ENCODE measurements at regions of chr16 and their contacts with region 1.

Region 1: DNA sequence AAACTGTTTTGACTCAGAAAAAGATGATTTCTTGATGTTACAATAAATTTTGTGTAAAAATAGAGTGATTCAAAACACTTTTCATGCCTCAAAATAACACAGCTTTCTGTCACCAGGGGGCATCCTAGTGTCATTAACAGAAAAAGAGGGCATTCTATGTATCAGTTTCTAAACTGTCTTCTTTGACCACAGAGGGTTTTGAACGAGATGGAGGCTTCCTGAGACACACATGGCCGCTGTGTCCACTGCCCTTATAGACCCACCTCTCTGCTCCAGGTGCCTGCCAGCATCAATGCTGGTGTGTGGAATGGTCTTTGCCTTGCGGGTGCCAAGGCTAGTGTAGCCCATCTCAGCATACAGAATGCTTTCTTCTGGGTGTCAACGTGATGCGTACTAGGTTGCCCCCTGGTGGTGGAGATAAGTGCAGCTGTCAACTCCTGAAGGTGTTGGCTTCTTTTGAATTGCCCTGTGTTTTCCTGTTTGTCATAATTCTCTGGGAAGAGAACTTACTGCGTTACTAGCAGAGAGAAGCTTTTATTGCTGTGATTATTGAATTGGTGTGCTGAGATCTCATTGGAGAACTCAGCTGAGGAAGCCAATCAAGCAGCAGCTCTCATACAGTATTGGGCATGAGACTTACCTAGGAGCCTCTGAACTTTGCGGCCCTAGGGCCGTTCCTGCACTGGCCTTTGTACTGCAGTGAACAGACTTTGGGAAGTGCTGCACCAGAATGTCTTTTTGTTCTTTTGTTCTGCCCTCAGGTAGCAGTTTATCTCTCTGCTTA is 38.6 kb downstream of the USP10 start:
- DNase-seq: peak; percentile 79
- H3K4me3 Mint-ChIP-seq: peak overlapping the region; percentile 46
- H3K27ac Mint-ChIP-seq: peak overlapping the region; percentile 44
- H3K4me1 Mint-ChIP-seq: peaks cover 73% of the 10 kb centered on the region
- H3K27me3 Mint-ChIP-seq: no peaks in the 10 kb centered on the region

Region 2: DNA sequence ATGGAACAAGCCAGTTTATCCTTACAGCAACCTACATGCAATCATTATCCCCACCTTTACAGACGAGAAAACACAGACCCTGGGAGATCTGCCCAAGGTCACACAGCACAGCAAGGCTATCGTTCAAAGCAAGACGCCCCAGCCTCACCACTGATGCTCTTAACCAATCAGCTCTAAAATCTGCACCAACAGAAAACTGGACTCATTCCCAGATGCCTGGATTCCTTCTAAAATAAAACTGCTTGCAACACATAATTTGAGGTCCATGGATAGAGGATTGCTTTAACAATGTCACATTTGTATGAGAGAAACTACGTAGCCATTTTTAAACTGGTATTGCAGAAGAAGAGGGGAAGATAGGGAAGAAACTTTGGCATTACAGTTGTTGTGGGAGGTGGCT is 127.4 kb before region 1 on chr16:
- CTCF ChIA-PET with region 1: no interaction called
- POLR2A ChIA-PET with region 1: no interaction called
- DNase-seq: no peak
- H3K4me3 Mint-ChIP-seq: no peak overlapping the region
- H3K27ac Mint-ChIP-seq: peak overlapping the region; percentile 92
- H3K4me1 Mint-ChIP-seq: peaks cover 98% of the 10 kb centered on the region
- H3K27me3 Mint-ChIP-seq: no peaks in the 10 kb centered on the region

Region 3: GRCh38 chr16:84672276-84673202 is 65.9 kb before region 1 on chr16:
- CTCF ChIA-PET with region 1: interaction called, 40 read pairs
- POLR2A ChIA-PET with region 1: no interaction called
- DNase-seq: peak; percentile 81
- H3K4me3 Mint-ChIP-seq: no peak overlapping the region
- H3K27ac Mint-ChIP-seq: no peak overlapping the region
- H3K4me1 Mint-ChIP-seq: peaks cover 9% of the 10 kb centered on the region
- H3K27me3 Mint-ChIP-seq: peaks cover 10% of the 10 kb centered on the region

Region 4: DNA sequence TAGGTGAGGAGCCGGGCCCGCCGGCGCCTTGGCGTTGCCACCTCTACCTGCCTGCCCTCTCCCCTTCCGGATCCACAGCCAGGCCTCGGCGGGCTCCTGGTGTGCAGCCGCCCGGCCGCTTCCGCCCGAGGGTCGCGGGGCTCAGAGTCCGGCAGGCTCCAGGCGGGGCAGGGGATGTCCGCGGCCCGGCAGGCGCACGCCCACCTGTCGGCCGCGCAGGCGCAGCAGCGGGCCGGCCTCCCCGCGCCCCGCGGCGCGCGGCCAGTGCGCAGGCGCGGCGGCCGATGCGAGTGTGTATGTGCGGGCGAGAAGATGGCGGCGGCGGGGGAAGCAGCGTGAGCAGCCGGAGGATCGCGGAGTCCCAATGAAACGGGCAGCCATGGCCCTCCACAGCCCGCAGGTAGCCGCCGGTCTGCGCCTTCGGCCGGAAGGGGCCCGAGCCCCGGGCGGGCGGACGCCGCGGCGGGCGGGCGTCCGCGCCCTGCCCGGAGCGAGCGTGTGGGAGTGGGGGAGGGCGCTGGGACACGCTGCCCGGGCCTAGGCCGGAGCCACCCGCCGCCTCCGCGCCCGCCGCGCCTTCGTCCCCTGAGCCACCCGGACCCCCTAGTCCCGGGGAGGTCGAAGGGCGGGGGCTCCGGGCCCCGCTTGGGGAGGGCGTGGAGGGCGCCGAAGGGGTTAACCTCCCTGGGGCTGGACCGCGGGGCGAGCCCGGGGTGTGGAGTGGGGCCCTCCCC is 38.6 kb before region 1 on chr16 and contains the start of gene USP10:
- CTCF ChIA-PET with region 1: interaction called, 15 read pairs
- POLR2A ChIA-PET with region 1: interaction called, 8 read pairs
- DNase-seq: peak; percentile 87
- H3K4me3 Mint-ChIP-seq: peak within 1 kb of the TSS; percentile 97
- H3K27ac Mint-ChIP-seq: peak within 1 kb of the TSS; percentile 94
- H3K4me1 Mint-ChIP-seq: peaks cover 41% of the 10 kb centered on the region
- H3K27me3 Mint-ChIP-seq: peaks cover 4% of the 10 kb centered on the region
- total RNA-seq, gene USP10: 92.2 to 94.4 TPM

Region 5: DNA sequence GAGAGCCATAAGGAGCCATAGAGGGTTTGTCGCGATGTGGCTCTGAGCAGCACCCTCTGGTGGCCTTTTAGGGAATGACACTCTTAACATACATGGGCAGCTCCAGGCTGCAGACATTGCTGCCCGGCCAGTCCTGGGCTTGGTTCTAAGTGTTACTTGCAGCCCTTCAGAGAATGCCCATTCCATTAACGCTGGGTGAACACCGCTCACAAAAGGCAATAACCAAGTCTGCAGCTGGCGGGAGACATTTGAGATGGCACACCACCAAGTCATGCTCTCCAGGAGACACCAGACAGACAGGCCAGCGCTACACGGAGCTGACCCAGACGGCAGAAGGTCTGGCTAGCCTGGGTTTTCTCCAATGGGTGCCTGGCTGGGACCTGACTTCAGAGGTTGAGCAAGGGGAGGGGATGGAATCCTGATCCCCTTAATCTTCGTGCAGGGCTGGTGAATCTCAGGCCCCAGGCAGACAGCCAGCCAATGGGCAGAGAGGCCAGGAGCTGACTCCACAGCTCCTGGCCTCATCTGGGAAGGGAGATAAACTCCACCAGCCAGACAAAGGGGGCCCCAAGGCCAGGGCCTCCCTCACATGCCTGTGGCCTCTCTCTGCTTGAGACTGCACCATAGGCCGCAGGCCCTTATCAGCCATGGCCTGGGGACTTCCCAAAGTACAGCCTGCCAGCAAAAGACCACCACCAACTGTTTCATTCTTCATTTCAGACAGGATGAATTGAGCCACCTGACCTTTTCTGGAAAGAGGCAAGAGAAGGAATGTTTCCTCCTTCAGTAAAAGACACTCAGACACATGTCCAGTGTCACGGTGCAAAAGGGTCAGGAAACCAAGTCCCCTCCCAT is 214.1 kb after region 1 on chr16:
- CTCF ChIA-PET with region 1: interaction called, 11 read pairs
- POLR2A ChIA-PET with region 1: no interaction called
- DNase-seq: peak; percentile 74
- H3K4me3 Mint-ChIP-seq: no peak overlapping the region
- H3K27ac Mint-ChIP-seq: no peak overlapping the region
- H3K4me1 Mint-ChIP-seq: peaks cover 2% of the 10 kb centered on the region
- H3K27me3 Mint-ChIP-seq: peaks cover 5% of the 10 kb centered on the region

Region 6: DNA sequence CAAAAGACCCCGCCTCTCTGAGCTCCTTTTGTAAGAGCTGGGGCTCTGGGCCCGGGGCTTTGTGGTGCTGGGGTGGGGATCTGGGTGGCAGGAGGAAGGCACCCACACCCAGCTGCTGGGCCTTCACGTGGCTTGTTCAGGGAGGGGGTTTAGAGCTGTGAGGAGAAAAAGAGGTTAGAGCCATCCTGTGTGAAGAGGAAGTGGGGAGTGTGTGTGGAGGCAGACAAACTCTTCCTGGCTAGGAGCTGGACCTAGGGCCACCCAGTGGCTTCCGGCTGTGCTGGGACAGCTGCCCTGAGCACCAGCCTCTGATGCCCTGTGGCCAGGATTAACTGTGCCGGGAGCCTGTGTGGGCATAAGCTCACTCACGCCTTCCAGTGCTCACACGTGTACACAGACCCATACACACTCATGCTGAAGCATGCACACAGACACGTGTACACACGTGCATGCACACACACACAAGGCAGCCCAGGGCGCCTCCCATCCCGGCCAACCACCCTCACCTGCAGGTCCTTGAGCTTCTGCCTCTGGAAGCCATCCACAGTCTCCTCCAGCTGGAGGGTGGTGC is 366.5 kb after region 1 on chr16:
- CTCF ChIA-PET with region 1: no interaction called
- POLR2A ChIA-PET with region 1: no interaction called
- DNase-seq: peak; percentile 52
- H3K4me3 Mint-ChIP-seq: no peak overlapping the region
- H3K27ac Mint-ChIP-seq: peak overlapping the region; percentile 60
- H3K4me1 Mint-ChIP-seq: peaks cover 28% of the 10 kb centered on the region
- H3K27me3 Mint-ChIP-seq: no peaks in the 10 kb centered on the region

Measured in activated CD4-positive, alpha-beta memory T cell treated with anti-CD3 and anti-CD28 coated beads, Interleukin-2, amount 10 ng/mL, durations not matched to agents 7 days and 5 days (primary cell).